Left lung (tissue), 14 donors: ENCODE measurements at regions of chr3 and their contacts with region 1.

Region 1: GRCh38 chr3:150868282-150868681 is 37.0 kb downstream of the MINDY4B start:
- DNase-seq: peak in 1 of 4 donors; percentile 39
- ATAC-seq: peak; percentile 78
- H3K4me3 ChIP-seq: no peak overlapping the region
- H3K27ac ChIP-seq: no peak overlapping the region
- H3K4me1 ChIP-seq: no peaks in the 10 kb centered on the region
- H3K27me3 ChIP-seq: no peaks in the 10 kb centered on the region
- CTCF ChIP-seq: no peak

Region 2: GRCh38 chr3:150528354-150528797 is 339.9 kb before region 1 on chr3:
- intact Hi-C with region 1: loop called in 1 of 2 experiments (anchors 10 kb)
- DNase-seq: peak in 2 of 4 donors; percentile 22 to 33
- ATAC-seq: peak; percentile 64
- H3K4me3 ChIP-seq: no peak overlapping the region
- H3K27ac ChIP-seq: no peak overlapping the region
- H3K4me1 ChIP-seq: no peaks in the 10 kb centered on the region
- H3K27me3 ChIP-seq: no peaks in the 10 kb centered on the region
- CTCF ChIP-seq: peak; percentile 14 to 24

Region 3: GRCh38 chr3:150727653-150728502 is 140.4 kb before region 1 on chr3:
- intact Hi-C with region 1: loop called in 1 of 2 experiments (anchors 5 kb)
- DNase-seq: no peak
- ATAC-seq: peak; percentile 79
- H3K4me3 ChIP-seq: no peak overlapping the region
- H3K27ac ChIP-seq: peak overlapping the region in 1 of 2 donors; percentile 43
- H3K4me1 ChIP-seq: peaks cover 0 to 10% of the 10 kb centered on the region in 2 donors
- H3K27me3 ChIP-seq: no peaks in the 10 kb centered on the region
- CTCF ChIP-seq: no peak